Activated naive CD4-positive, alpha-beta T cell treated with anti-CD3 and anti-CD28 coated beads for 36 hours (primary cell): ENCODE measurements at regions of chr14 and their contacts with region 1.

Region 1: DNA sequence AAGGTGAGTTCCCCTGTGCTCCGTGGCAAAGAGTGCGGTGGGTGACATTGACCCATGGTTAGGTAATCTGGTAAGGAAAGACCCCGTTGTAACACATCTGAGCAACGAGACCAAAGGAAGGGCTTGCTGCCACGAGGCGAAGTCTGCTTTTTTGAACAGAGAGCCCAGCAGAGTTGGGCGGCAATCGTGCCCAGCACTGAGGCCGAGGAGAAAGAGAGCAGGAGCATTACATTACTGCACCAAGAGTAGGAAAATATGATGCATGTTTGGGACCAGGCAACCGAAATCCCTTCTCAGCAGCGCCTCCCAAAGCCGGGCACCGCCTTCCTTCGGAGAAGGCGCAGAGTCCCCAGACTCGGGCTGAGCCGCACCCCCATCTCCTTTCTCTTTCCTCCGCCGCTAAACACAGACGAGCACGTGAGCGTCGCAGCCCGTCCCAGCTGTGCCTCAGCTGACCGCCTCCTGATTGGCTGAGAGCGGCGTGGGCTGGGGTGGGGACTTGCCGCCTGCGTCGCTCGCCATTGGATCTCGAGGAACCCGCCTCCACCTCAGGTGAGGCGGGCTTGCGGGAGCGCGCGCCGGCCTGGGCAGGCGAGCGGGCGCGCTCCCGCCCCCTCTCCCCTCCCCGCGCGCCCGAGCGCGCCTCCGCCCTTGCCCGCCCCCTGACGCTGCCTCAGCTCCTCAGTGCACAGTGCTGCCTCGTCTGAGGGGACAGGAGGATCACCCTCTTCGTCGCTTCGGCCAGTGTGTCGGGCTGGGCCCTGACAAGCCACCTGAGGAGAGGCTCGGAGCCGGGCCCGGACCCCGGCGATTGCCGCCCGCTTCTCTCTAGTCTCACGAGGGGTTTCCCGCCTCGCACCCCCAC is at the start of gene HIF1A:
- DNase-seq: peak; percentile 98
- H3K4me3 Mint-ChIP-seq: peak within 1 kb of the TSS; percentile 94
- H3K27ac Mint-ChIP-seq: peak within 1 kb of the TSS; percentile 93
- H3K4me1 Mint-ChIP-seq: peaks cover 44% of the 10 kb centered on the region
- H3K27me3 Mint-ChIP-seq: no peaks in the 10 kb centered on the region
- total RNA-seq, gene HIF1A: 398 to 417 TPM

Region 2: GRCh38 chr14:61326847-61327246 is 368.2 kb before region 1 on chr14:
- CTCF ChIA-PET with region 1: no interaction called
- intact Hi-C with region 1: loop called (anchors 2 kb)
- DNase-seq: no peak
- H3K4me3 Mint-ChIP-seq: peak overlapping the region; percentile 63
- H3K27ac Mint-ChIP-seq: peak overlapping the region; percentile 95
- H3K4me1 Mint-ChIP-seq: peaks cover 70% of the 10 kb centered on the region
- H3K27me3 Mint-ChIP-seq: no peaks in the 10 kb centered on the region

Region 3: DNA sequence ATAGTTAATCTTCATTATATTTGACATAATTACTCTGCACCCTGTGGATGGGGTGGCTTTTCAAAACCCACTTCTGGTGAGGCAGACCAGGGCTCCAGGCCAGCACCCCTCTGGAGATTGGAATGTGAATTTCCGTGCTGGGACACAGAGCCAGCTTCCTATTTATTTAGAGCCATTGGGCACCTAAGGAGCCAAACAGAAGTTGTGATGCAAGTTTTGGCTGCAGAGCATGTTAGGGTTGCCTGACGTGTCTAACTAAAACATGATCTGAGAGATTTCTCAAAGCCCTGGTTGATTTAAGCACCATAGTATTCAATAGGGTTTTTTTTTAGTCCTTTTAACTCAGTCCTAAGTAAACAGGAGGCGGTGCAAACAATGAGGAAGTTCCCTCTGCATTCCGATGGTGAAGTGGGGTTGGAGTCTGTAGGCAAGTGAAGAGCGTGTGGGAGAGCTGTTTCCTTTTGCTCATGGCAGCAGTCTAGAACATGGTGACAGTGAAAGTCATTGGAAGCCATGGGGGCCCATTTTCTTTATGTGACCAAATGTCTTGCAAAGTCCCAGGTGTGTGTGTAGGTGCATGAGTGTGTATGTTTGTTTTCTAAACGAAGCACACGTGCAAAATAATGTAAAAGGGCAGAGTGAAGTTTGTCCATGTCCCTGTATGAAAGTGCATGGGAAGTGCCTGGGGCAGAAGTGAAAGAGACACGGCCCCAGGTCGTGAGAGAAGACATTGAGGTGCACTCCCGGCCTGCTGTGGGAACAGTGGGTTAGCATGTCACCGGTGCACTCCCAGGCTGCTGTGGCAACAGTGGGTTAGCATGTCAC is 256.0 kb before region 1 on chr14:
- CTCF ChIA-PET with region 1: no interaction called
- intact Hi-C with region 1: no loop called
- DNase-seq: peak; percentile 60
- H3K4me3 Mint-ChIP-seq: peak overlapping the region; percentile 63
- H3K27ac Mint-ChIP-seq: peak overlapping the region; percentile 84
- H3K4me1 Mint-ChIP-seq: peaks cover 93% of the 10 kb centered on the region
- H3K27me3 Mint-ChIP-seq: no peaks in the 10 kb centered on the region

Region 4: DNA sequence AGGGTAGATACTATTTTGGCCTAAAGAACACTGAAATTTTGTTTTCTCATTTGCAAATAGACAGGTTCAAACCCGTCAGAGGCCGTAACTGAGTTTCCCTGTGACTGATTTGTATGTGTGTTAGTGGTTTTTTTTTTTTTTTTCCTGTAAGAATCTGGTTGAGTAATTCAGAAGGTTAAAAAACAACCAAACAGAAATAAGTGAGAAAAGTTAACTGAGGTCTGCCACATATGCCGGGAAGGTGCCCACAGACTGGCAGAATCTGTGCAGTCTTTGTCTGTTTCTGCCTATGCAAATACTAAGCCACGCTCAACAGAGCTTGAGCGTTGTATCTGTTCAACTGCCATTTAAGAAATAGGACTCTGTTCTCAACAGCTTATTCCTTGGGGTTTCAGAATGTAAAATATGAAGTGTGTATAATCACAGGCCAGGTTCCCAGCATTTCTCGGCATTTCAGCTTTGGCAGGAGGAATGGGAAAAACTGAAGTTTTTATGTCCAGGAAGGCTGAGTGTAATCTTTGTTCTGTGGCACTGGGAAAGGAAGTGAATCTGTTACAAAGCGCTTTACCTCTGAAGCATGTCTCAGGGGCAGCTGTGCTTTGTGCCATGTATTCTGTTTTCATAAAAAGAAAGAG is 191.8 kb before region 1 on chr14:
- CTCF ChIA-PET with region 1: no interaction called
- intact Hi-C with region 1: loop called (anchors 1 kb)
- DNase-seq: peak; percentile 92
- H3K4me3 Mint-ChIP-seq: peak overlapping the region; percentile 66
- H3K27ac Mint-ChIP-seq: peak overlapping the region; percentile 100
- H3K4me1 Mint-ChIP-seq: peaks cover 97% of the 10 kb centered on the region
- H3K27me3 Mint-ChIP-seq: no peaks in the 10 kb centered on the region

Region 5: DNA sequence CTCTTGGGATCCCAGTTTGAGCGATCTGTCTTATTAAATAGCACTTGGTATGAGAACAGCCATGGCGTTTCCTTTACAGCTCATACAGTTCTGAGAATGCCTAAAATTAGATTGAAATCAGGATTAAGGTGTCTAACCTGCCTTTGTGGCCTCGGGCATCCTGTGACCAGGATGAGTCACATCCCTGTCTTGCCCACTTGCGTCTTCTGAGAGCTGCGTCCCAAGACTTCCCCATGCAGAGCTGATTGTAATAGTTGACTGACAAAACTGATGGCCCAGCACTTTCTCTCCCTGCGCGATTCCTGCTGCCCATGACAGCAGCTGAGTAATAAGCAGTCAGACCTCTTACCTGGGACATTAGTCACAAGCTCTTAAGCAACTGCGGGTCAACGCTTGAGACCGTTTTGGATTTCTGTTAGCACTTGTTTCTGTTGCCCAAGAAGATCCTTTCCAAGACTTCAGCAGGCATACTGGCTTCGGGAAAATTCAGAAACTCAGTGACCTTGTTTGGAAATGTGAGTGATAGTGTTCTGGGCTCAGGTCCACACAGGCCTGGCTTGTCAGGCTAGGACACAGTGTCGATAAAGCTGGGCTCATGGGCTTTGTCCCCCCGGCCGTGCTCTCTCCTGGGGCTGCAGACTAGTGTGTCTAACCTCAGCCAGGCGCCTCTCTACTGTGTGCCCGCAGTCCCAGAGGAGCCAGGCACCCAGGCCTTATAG is 169.6 kb before region 1 on chr14:
- CTCF ChIA-PET with region 1: no interaction called
- intact Hi-C with region 1: loop called (anchors 1 kb)
- DNase-seq: peak; percentile 91
- H3K4me3 Mint-ChIP-seq: peak overlapping the region; percentile 22
- H3K27ac Mint-ChIP-seq: peak overlapping the region; percentile 94
- H3K4me1 Mint-ChIP-seq: peaks cover 84% of the 10 kb centered on the region
- H3K27me3 Mint-ChIP-seq: no peaks in the 10 kb centered on the region

Region 6: GRCh38 chr14:61568572-61569131 is 126.4 kb before region 1 on chr14:
- CTCF ChIA-PET with region 1: no interaction called
- intact Hi-C with region 1: loop called (anchors 1 kb)
- DNase-seq: peak; percentile 71
- H3K4me3 Mint-ChIP-seq: peak overlapping the region; percentile 73
- H3K27ac Mint-ChIP-seq: peak overlapping the region; percentile 91
- H3K4me1 Mint-ChIP-seq: peaks cover 87% of the 10 kb centered on the region
- H3K27me3 Mint-ChIP-seq: no peaks in the 10 kb centered on the region

Region 7: GRCh38 chr14:61671082-61671481 is 24.0 kb before region 1 on chr14:
- CTCF ChIA-PET with region 1: interaction called, 3 read pairs
- intact Hi-C with region 1: loop called (anchors 1 kb)
- DNase-seq: peak; percentile 69
- H3K4me3 Mint-ChIP-seq: peak overlapping the region; percentile 35
- H3K27ac Mint-ChIP-seq: no peak overlapping the region
- H3K4me1 Mint-ChIP-seq: peaks cover 25% of the 10 kb centered on the region
- H3K27me3 Mint-ChIP-seq: no peaks in the 10 kb centered on the region

Region 8: GRCh38 chr14:61730756-61731373 is 35.8 kb after region 1 on chr14:
- CTCF ChIA-PET with region 1: no interaction called
- intact Hi-C with region 1: loop called (anchors 5 kb)
- DNase-seq: no peak
- H3K4me3 Mint-ChIP-seq: no peak overlapping the region
- H3K27ac Mint-ChIP-seq: peak overlapping the region; percentile 65
- H3K4me1 Mint-ChIP-seq: peaks cover 58% of the 10 kb centered on the region
- H3K27me3 Mint-ChIP-seq: no peaks in the 10 kb centered on the region

Region 9: DNA sequence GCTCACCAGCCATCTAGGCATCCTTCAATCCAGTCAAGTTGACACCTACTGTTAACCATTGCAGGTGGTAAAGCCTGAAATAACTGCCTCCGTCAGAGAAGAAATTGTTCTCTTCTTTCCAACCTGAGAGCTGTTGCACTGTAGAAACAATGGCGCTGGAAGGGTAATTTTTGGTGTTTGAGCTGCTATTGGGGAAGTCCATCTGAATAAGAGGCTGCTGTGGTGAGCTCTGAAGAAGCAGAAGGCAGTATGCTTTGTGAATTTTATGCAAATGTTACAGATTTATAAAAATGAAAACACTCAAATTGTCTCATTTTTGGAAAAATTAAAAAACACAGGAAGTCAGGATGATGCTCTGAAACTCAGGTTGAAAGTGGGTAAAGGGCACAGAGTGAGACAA is 127.4 kb after region 1 on chr14:
- CTCF ChIA-PET with region 1: no interaction called
- intact Hi-C with region 1: no loop called
- DNase-seq: peak; percentile 46
- H3K4me3 Mint-ChIP-seq: no peak overlapping the region
- H3K27ac Mint-ChIP-seq: peak overlapping the region; percentile 30
- H3K4me1 Mint-ChIP-seq: peaks cover 9% of the 10 kb centered on the region
- H3K27me3 Mint-ChIP-seq: peaks cover 3% of the 10 kb centered on the region